AG04449 (cell line): ENCODE measurements at regions of chr3 and their contacts with region 1.

Region 1: DNA sequence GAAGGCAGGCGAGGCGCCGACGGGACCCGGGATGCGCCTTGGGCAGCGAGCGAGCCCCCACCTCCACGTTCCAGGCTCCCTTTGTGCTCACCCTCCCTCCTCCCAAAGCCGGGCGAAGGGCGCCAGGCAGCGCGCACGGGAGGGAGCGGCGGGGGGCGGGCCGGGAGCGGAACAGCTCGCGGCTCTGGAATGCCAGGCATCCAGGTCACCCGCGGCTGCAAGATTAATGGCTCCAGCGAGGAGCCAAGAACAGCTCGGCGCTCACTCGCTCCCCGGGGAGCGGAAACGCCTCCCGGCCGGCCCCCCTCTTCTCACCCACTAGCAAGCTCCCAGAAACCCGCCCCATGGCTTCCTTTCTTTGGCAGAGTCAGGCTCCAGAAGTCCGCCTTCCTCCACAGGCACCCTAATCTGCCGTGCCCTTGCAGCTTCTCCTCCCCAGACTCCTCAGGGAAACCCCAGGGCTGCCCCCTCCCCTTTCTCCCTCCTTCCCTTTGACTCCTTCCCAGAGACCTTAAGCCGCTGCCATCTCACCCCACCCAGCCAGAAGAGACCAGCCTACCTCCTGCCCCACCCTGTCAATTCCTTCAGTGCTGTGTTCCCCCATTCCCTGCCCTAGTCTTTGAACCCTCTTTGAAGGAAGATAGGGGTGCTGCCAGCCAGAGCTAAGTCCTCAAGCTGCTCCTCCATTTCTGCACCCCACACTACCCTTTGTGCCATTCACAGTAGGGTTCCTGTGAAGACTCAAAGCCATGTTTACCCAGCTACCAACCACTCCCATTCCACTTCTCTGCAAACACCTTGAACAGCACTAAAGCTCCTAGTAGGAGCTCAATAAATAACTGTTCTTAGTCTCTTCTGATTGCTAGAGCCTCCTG is 9.9 kb downstream of the AMOTL2 start:
- DNase-seq: peak; percentile 95
- H3K4me3 ChIP-seq: peak overlapping the region; percentile 42
- CTCF ChIP-seq: no peak

Region 2: DNA sequence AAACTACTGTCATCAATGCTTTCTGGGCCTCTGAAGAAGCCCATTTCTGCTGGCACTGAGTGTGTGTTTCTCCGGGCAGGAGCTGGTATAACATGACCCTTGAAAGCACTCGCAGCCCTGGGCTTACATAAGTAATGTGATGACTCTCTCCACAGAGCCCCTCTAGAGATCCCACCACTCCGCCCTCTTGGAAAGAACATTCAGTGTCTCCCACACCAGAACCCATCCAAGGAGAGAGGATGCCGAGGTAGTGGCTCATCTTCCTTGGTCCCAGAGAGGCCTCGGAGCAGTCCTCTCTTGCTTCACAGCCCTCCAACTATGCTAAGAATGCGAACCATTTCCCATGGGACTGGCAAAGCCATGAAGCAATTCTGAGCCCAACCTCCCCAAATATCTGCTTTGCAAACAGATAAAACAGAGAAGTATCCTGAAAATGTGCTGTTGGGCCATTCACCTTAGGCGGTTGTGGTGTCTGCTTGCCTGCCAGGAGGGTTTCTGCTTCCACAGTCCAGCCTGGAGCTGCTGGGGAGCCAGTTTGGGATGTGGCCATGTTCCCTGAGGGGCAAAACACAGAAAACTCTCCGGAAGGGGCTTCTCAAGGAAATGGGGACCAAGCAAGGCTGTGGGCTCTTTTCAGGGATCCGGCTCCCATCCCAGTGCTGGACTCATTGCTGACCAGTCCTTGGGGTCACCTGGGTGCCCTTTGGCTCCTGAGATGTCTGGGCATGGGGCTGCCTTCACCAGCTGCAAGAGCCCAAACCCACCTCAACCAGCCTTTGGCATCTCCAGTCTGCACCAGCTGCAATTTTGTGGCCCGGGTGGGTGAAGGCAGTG is 37.3 kb before region 1 on chr3:
- CTCF ChIA-PET with region 1: interaction called, 7 read pairs
- POLR2A ChIA-PET with region 1: interaction called, 16 read pairs
- DNase-seq: peak; percentile 99
- H3K4me3 ChIP-seq: peak overlapping the region; percentile 2; the same call in 1 of the 2 replicates
- CTCF ChIP-seq: no peak

Region 3: GRCh38 chr3:134427400-134428145 is 63.3 kb after region 1 on chr3:
- CTCF ChIA-PET with region 1: interaction called, 3 read pairs
- POLR2A ChIA-PET with region 1: interaction called, 35 read pairs
- DNase-seq: peak; percentile 99
- H3K4me3 ChIP-seq: no peak overlapping the region
- CTCF ChIP-seq: no peak

Region 4: GRCh38 chr3:134485718-134486576 is 121.6 kb after region 1 on chr3 and contains the starts of genes ANAPC13 and CEP63:
- CTCF ChIA-PET with region 1: interaction called, 424 read pairs
- POLR2A ChIA-PET with region 1: interaction called, 24 read pairs
- DNase-seq: peak; percentile 96
- H3K4me3 ChIP-seq: peak within 1 kb of the TSS; percentile 82
- CTCF ChIP-seq: no peak